Ovary (tissue), 10 donors: ENCODE measurements at regions of chr12 and their contacts with region 1.

Region 1: DNA sequence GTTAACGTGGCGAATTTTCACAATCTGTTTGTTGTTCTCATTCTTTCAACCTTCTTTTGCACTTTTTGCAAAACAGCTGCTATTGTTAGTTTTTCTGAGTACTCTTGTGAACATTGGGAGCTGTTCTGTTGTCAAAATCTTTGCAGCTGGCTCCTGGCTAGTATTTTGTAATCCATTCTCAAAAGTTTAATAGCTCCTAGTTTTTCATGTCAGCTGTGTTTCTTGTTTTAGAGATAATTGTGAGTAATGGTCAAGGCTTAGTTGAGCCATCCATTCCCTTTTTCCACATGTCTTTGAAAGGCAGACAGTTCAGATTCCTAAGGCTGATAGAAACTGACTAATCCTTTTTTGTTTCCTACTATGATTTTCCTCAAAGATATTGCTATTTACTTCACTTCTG is 39.1 kb upstream of the CRADD start:
- DNase-seq: no peak
- H3K4me3 ChIP-seq: no peak overlapping the region
- H3K27ac ChIP-seq: no peak overlapping the region
- H3K4me1 ChIP-seq: no peaks in the 10 kb centered on the region
- H3K27me3 ChIP-seq: no peaks in the 10 kb centered on the region
- CTCF ChIP-seq: no peak
- EP300 ChIP-seq: no peak
- POLR2A ChIP-seq: no peak

Region 2: GRCh38 chr12:93514853-93515252 is 123.2 kb before region 1 on chr12:
- intact Hi-C with region 1: loop called in 1 of 4 experiments (anchors 10 kb)
- DNase-seq: no peak
- H3K4me3 ChIP-seq: no peak overlapping the region
- H3K27ac ChIP-seq: no peak overlapping the region
- H3K4me1 ChIP-seq: no peaks in the 10 kb centered on the region
- H3K27me3 ChIP-seq: no peaks in the 10 kb centered on the region
- CTCF ChIP-seq: no peak
- EP300 ChIP-seq: no peak
- POLR2A ChIP-seq: no peak